ENCODE measurements at regions of chr2 and their contacts with region 1.

Region 1: DNA sequence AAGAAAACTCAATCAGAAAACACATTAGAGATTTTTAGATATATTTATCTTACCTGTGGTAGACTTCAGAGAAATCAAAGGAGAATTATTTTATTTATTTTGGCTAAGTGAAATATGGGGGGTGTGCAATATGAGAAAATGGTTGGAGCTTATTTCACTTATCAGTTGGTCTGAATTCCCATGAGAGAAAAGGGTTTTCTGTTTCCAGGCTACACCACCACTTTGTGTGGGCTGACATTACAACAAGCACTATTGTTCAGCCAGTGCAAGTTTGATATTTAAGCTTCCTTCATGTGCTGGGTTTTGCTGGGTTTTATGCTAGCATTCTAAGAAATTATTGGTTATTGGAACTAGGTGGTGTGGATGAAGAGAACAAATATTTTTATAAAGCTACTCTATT is 33.5 kb downstream of the RMND5A start:
- DNase-seq: no peak
- ATAC-seq: no peak
- H3K4me3 ChIP-seq: no peak overlapping the region
- H3K4me3 Mint-ChIP-seq: no peak overlapping the region
- H3K27ac ChIP-seq: no peak overlapping the region
- H3K27ac Mint-ChIP-seq: no peak overlapping the region
- H3K4me1 ChIP-seq: no peaks in the 10 kb centered on the region
- H3K4me1 Mint-ChIP-seq: peaks cover 18% of the 10 kb centered on the region
- H3K27me3 ChIP-seq: no peaks in the 10 kb centered on the region
- H3K27me3 Mint-ChIP-seq: no peaks in the 10 kb centered on the region
- CTCF ChIP-seq: no peak

Region 2: DNA sequence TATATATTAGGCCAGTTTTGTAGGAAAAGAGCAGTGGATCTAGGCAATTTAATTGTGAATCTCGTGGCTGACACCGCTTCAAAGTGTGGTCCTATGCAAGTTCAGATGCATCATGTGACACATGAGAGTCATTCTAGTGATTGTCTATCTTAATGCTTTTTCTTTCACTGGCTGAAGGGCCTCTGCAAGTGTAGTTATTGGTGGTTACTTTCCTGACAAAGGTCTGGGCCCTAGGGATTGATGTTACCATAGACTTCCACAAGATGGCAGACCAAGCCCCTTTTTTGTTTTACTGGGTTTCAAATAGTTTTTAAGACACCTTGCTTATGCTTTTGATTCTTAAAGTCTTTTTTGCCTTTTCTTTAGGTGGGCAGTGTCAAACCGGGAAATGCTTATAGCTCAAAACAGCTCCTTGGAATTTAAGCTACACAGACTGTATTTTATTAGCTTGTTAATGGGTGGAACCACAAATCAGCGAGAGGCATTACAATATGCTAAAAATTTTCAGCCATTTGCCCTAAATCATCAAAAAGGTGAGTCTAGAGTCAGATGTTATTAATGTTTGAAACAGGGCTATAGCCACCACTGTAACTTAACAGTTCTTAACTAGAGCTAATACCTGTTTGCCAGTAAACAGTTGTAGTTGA is 11.2 kb after region 1 on chr2:
- CTCF ChIA-PET with region 1: interaction called, 12 read pairs
- POLR2A ChIA-PET with region 1: no interaction called
- intact Hi-C with region 1: no loop called
- DNase-seq: peak; percentile 54
- ATAC-seq: peak; percentile 60
- H3K4me3 ChIP-seq: no peak overlapping the region
- H3K4me3 Mint-ChIP-seq: no peak overlapping the region
- H3K27ac ChIP-seq: no peak overlapping the region
- H3K27ac Mint-ChIP-seq: no peak overlapping the region
- H3K4me1 ChIP-seq: no peaks in the 10 kb centered on the region
- H3K4me1 Mint-ChIP-seq: peaks cover 14% of the 10 kb centered on the region
- H3K27me3 ChIP-seq: no peaks in the 10 kb centered on the region
- H3K27me3 Mint-ChIP-seq: no peaks in the 10 kb centered on the region
- CTCF ChIP-seq: peak; percentile 77